MCF 10A (cell line): ENCODE measurements at regions of chr2 and their contacts with region 1.

Region 1: DNA sequence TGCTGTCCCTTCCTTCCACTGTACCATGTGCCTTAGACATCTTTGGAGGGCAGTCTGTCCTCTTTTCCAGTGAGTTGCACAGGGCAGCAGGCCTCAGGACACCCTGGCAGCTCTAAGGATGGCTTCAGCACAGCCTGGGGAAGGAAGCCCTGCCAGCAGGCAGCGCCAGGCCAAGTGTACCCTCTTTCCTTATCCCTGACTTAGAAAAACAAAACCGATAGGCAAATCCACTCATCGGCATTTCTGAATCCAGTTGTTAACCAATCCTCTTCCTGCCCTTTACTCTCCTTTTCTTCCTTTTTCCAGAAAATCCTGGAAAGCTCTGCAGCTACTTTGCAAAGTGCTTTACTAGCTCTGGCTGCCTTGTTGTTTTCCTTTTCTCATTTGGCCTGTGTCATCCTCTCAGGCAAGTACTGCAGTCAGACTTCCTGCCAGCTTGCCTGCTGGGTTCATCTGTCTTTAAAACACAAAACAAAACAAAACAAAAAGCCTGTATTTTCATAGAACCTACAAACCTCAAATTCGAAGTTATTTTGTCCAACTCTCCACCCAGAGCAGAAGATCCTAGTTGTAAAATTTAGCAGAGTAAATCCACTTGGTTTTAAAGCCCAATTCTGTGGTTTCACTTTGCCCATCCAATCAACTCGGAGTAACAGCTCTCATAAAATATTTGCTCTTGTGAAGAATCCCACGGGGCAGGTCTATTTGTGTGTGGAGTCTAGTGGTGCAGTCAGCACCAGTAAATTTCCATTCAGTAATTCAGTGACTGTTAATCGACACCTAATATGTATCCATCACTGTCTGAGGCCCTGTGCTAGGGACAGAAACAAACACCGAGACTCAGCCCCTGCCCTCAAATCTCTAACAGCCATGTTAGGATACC is 45.2 kb downstream of the PCBP1 start:
- DNase-seq: peak; percentile 43
- H3K4me3 Mint-ChIP-seq: peak overlapping the region; percentile 59
- H3K27ac Mint-ChIP-seq: peak overlapping the region; percentile 90
- H3K4me1 Mint-ChIP-seq: peaks cover 37% of the 10 kb centered on the region
- H3K27me3 Mint-ChIP-seq: no peaks in the 10 kb centered on the region
- CTCF ChIP-seq: no peak

Region 2: GRCh38 chr2:69955029-69955428 is 177.5 kb before region 1 on chr2:
- CTCF ChIA-PET with region 1: no interaction called
- POLR2A ChIA-PET with region 1: no interaction called
- intact Hi-C with region 1: no loop called
- DNase-seq: peak; percentile 25
- H3K4me3 Mint-ChIP-seq: no peak overlapping the region
- H3K27ac Mint-ChIP-seq: peak overlapping the region; percentile 28
- H3K4me1 Mint-ChIP-seq: peaks cover 6% of the 10 kb centered on the region
- H3K27me3 Mint-ChIP-seq: peaks cover 18% of the 10 kb centered on the region
- CTCF ChIP-seq: no peak

Region 3: DNA sequence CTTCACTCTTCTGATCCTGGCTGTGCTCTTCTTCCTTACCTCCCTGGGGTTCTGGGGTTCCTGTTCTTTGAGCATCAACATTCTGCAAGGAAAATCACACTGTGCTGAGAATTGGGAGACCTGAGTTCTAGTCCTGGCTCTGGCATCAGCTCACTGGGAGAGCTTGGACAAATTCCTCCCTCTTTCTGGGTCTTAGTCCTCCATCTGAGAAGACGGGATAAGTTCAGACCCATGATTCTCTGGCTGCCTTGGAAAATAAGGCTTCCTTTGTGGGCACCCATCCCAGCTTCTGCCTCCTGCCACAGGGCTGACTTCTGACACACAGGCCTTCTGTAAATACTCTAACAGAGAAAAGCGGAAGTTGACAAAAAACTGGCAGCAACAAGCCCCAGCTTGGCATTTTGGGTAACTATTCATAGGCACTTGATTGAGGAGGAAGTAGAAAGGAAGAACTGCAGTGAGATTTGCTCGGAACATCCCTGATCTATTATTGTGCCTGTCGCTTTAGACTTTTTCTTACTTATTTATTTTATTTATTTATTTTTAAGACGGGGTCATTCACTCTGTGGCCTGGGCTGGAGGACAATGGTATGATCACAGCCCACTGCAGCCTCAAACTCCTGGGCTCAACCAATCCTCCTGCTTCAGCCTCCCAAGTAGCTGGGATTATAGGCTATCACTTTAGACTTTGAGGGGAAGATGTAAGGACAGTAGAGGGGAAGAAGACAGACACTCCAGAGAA is 37.3 kb before region 1 on chr2:
- CTCF ChIA-PET with region 1: interaction called, 4 read pairs
- POLR2A ChIA-PET with region 1: interaction called, 328 read pairs
- intact Hi-C with region 1: no loop called
- DNase-seq: no peak
- H3K4me3 Mint-ChIP-seq: no peak overlapping the region
- H3K27ac Mint-ChIP-seq: peak overlapping the region; percentile 61
- H3K4me1 Mint-ChIP-seq: peaks cover 13% of the 10 kb centered on the region
- H3K27me3 Mint-ChIP-seq: no peaks in the 10 kb centered on the region
- CTCF ChIP-seq: no peak

Region 4: GRCh38 chr2:70115646-70116442 is 16.6 kb before region 1 on chr2:
- CTCF ChIA-PET with region 1: interaction called, 3 read pairs
- POLR2A ChIA-PET with region 1: interaction called, 13 read pairs
- intact Hi-C with region 1: no loop called
- DNase-seq: no peak
- H3K4me3 Mint-ChIP-seq: no peak overlapping the region
- H3K27ac Mint-ChIP-seq: no peak overlapping the region
- H3K4me1 Mint-ChIP-seq: no peaks in the 10 kb centered on the region
- H3K27me3 Mint-ChIP-seq: no peaks in the 10 kb centered on the region
- CTCF ChIP-seq: no peak

Region 5: GRCh38 chr2:70160545-70160944 is 28.1 kb after region 1 on chr2:
- CTCF ChIA-PET with region 1: no interaction called
- POLR2A ChIA-PET with region 1: no interaction called
- intact Hi-C with region 1: no loop called
- DNase-seq: no peak
- H3K4me3 Mint-ChIP-seq: no peak overlapping the region
- H3K27ac Mint-ChIP-seq: no peak overlapping the region
- H3K4me1 Mint-ChIP-seq: no peaks in the 10 kb centered on the region
- H3K27me3 Mint-ChIP-seq: no peaks in the 10 kb centered on the region
- CTCF ChIP-seq: no peak